GM12878 (cell line): ENCODE measurements at regions of chr7 and their contacts with region 1.

Region 1: GRCh38 chr7:135211179-135211945 is at the start of gene WDR91:
- DNase-seq: peak; percentile 81
- ATAC-seq: peak; percentile 83
- H3K4me3 ChIP-seq: peak within 1 kb of the TSS; percentile 99
- H3K27ac ChIP-seq: peak within 1 kb of the TSS; percentile 91
- H3K4me1 ChIP-seq: peaks cover 39% of the 10 kb centered on the region
- H3K27me3 ChIP-seq: no peaks in the 10 kb centered on the region
- CTCF ChIP-seq: no peak
- EP300 ChIP-seq: no peak
- POLR2A ChIP-seq: peak; percentile 98
- RAD21 ChIP-seq: no peak
- polyA plus RNA-seq, gene WDR91: 7.6 to 10.1 TPM

Region 2: DNA sequence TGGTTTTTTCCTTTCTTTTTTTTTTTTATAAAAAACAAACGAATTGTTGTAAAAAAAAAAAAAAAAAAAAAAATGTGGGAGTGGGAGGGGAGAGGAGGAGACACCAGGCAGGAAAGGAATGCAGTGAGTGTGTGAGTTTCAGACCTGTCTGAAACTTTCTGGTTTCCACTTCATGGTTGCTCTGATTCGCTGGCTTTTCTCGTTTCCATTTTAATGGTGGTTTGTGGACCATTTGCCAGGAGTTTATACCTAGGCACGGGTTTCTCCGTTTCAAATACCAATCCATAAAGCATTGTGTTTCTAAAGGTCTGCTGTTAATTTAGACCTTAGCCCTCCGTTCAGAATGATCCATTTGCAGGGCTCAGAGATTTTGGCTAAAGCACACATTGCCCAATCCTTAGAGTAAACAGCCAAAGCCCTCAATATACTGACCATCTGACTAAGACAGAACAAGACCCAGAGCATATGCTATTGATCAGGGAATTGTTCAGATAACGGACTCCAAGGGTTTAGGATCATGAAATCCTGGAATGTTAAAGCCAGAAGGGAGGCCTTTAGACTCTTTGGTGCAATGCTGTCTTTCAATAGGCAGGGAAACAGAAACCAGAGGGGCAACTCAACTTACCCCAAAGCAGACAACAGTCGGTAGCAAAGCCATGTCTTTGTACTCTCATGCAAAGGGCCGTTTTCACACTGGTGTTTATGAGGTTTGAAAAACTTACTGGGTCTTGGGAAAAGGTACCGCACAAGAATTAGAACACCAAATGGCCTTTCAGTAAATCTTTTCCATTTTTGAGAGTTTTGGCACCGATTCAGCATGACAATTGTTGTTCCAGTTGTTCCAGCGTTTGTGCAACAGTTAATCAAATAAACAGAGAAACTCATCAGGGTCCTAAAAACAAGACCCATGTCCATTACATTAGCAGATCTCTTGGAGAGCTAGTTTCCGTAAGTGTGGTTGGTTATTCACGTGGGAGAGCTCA is 319.4 kb before region 1 on chr7:
- CTCF ChIA-PET with region 1: no interaction called
- POLR2A ChIA-PET with region 1: no interaction called
- RAD21 ChIA-PET with region 1: no interaction called
- SMC1A ChIA-PET with region 1: no interaction called
- in situ Hi-C with region 1: no loop called
- intact Hi-C with region 1: no loop called
- DNase-seq: no peak
- ATAC-seq: peak; percentile 32; the same call in 2 of the 3 replicates
- H3K4me3 ChIP-seq: no peak overlapping the region
- H3K27ac ChIP-seq: no peak overlapping the region
- H3K4me1 ChIP-seq: no peaks in the 10 kb centered on the region; the same call in 1 of the 2 replicates
- H3K27me3 ChIP-seq: no peaks in the 10 kb centered on the region
- CTCF ChIP-seq: no peak
- EP300 ChIP-seq: no peak
- POLR2A ChIP-seq: no peak
- RAD21 ChIP-seq: no peak

Region 3: GRCh38 chr7:135186841-135187253 is 24.5 kb before region 1 on chr7:
- CTCF ChIA-PET with region 1: interaction called, 108 read pairs
- POLR2A ChIA-PET with region 1: interaction called, 299 read pairs
- RAD21 ChIA-PET with region 1: interaction called, 230 read pairs
- SMC1A ChIA-PET with region 1: interaction called, 251 read pairs
- in situ Hi-C with region 1: no loop called
- intact Hi-C with region 1: loop called (anchors 1 kb)
- DNase-seq: no peak
- ATAC-seq: peak; percentile 77
- H3K4me3 ChIP-seq: peak overlapping the region; percentile 25; the same call in 1 of the 2 replicates
- H3K27ac ChIP-seq: peak overlapping the region; percentile 58
- H3K4me1 ChIP-seq: peaks cover 33% of the 10 kb centered on the region
- H3K27me3 ChIP-seq: no peaks in the 10 kb centered on the region
- CTCF ChIP-seq: peak in 1 of 3 experiments; percentile 24; a peak in 1 of 6 replicates
- EP300 ChIP-seq: peak; percentile 94 to 95; a peak in 3 of 4 replicates
- POLR2A ChIP-seq: peak; percentile 65
- RAD21 ChIP-seq: peak; percentile 27; the same call in 1 of the 2 replicates

Region 4: DNA sequence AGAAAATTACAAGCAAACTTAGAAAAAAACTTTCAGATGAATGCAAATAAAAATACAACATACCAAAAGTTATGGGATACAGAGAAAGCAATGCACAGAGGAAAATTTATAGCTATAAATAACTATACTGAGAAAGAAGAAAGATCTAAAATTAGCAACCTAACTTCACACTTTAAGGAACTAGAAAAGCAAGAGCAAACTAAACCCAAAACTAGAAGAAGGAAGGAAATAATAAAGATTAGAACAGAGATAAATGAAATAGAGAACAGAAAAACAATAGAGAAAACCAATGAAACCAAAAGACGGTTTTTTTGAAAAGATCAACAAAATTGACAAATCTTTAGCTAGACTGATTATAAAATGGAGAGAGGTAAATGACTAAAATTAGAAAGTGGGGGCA is 12.7 kb after region 1 on chr7:
- CTCF ChIA-PET with region 1: interaction called, 5 read pairs
- POLR2A ChIA-PET with region 1: interaction called, 7 read pairs
- RAD21 ChIA-PET with region 1: interaction called, 7 read pairs
- SMC1A ChIA-PET with region 1: interaction called, 23 read pairs
- in situ Hi-C with region 1: no loop called
- intact Hi-C with region 1: no loop called
- DNase-seq: no peak
- ATAC-seq: peak; percentile 55
- H3K4me3 ChIP-seq: no peak overlapping the region; the same call in 1 of the 2 replicates
- H3K27ac ChIP-seq: no peak overlapping the region
- H3K4me1 ChIP-seq: peaks cover 6% of the 10 kb centered on the region; the same call in 1 of the 2 replicates
- H3K27me3 ChIP-seq: no peaks in the 10 kb centered on the region
- CTCF ChIP-seq: no peak
- EP300 ChIP-seq: no peak
- POLR2A ChIP-seq: no peak
- RAD21 ChIP-seq: no peak

Region 5: GRCh38 chr7:135238112-135238744 is 26.9 kb after region 1 on chr7:
- CTCF ChIA-PET with region 1: interaction called, 7 read pairs
- POLR2A ChIA-PET with region 1: interaction called, 13 read pairs
- RAD21 ChIA-PET with region 1: interaction called, 8 read pairs
- SMC1A ChIA-PET with region 1: interaction called, 16 read pairs
- in situ Hi-C with region 1: no loop called
- intact Hi-C with region 1: no loop called
- DNase-seq: no peak
- ATAC-seq: peak; percentile 30; the same call in 2 of the 3 replicates
- H3K4me3 ChIP-seq: no peak overlapping the region
- H3K27ac ChIP-seq: no peak overlapping the region
- H3K4me1 ChIP-seq: peaks cover 14% of the 10 kb centered on the region
- H3K27me3 ChIP-seq: no peaks in the 10 kb centered on the region
- CTCF ChIP-seq: peak in 2 of 3 experiments; percentile 49 to 56; a peak in 4 of 6 replicates
- EP300 ChIP-seq: no peak
- POLR2A ChIP-seq: no peak
- RAD21 ChIP-seq: no peak